AG04450 (cell line): ENCODE measurements at regions of chr1 and their contacts with region 1.

Region 1: DNA sequence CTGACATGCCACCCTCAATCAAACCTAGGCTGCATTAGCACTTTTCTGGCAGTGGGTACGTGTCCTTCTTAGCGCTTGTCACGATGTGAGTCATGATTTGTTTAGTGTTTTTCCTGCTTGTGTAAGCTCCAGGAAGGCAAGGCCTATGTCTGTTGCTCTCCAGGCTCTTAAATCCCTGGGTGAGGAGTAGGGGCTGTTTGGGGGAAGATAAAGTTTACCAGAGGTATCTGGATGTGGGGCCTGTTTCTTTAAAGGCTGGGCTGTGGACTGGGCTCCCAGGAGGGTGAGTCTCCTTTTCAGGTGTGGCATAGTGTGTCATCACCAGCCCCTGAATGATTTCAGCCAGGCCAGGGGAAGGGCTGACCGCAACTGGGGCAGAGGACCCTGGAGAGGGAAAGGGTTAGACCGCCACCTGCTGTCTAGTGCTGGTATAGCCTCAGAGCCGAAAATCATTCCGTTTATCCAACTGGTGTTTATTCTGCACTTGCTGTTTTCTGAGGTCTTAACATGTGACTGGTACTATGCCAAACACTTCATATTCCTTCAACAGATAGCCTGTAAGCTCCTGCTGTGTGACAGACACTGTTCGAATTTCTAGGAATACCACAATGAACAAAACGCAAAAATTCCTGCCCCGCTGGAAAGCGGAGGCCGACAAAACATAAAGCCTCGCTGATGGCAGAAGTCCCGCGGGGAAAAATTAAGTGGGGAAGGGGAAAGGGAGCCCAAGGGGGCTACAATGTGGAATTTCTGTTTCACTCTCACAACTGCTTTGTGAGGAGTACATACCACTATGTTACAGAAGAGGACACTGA is 9.7 kb downstream of the SERINC2 start:
- DNase-seq: peak; percentile 55
- H3K4me3 ChIP-seq: no peak overlapping the region
- H3K27ac ChIP-seq: peak overlapping the region; percentile 87
- H3K27me3 ChIP-seq: no peaks in the 10 kb centered on the region
- CTCF ChIP-seq: peak; percentile 99

Region 2: GRCh38 chr1:31354283-31354682 is 68.4 kb before region 1 on chr1:
- CTCF ChIA-PET with region 1: no interaction called
- POLR2A ChIA-PET with region 1: no interaction called
- DNase-seq: no peak
- H3K4me3 ChIP-seq: no peak overlapping the region
- H3K27ac ChIP-seq: no peak overlapping the region
- H3K27me3 ChIP-seq: no peaks in the 10 kb centered on the region
- CTCF ChIP-seq: no peak

Region 3: DNA sequence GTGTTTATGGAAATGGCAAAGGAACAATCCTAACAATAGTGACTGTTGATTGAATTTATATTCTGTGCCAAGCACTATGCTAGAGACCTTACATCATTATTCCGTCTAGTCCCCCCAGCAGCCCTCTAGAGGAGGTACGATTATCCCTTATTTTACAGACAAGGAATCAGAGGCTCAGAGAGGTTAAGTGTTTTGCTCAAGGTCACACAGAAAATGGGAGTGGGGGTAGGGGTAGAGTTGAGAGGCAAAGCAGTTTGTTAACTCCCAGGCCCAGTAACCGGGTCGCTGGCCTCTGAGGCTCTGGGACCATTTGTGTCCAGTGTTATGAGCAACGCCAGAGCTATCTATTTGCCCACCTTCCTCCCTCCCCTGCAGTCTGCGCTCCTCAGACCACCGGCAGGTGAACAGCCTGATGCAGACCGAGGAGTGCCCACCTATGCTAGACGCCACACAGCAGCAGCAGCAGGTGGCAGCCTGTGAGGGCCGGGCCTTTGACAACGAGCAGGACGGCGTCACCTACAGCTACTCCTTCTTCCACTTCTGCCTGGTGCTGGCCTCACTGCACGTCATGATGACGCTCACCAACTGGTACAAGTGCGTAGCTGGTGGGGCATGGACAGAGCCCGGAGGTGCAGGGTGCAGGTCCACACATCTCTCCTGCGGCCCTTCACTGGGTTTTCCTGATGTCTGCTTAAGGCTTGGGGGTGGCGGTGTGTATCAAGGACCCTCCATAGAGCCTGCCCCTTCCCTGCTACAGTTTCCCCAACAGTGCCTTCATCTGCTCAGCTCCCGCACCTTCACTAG is 10.1 kb after region 1 on chr1:
- CTCF ChIA-PET with region 1: interaction called, 21 read pairs
- POLR2A ChIA-PET with region 1: no interaction called
- DNase-seq: no peak
- H3K4me3 ChIP-seq: no peak overlapping the region
- H3K27ac ChIP-seq: no peak overlapping the region
- H3K27me3 ChIP-seq: peaks cover 3% of the 10 kb centered on the region
- CTCF ChIP-seq: no peak

Region 4: DNA sequence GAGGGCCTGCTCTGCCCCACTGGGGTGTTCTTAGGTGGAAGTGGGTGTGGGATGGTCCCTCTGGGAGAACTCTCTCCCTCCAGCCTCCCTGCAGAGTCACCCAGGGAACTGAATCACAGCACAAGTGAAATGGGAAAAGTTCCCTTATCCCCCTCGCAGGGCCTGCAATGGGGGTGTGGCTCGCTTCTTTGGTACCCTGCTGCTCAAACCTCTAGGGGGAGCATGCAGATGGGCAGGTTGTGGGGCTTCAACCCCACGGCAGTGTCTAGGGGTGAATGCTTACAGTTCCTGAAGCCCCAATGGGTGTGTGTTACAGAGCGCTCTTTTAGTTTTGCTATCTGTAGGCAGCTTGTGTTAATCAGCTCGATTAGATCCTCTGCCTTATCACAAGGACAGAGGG is 94.6 kb after region 1 on chr1:
- CTCF ChIA-PET with region 1: no interaction called
- POLR2A ChIA-PET with region 1: no interaction called
- DNase-seq: no peak
- H3K4me3 ChIP-seq: no peak overlapping the region
- H3K27ac ChIP-seq: no peak overlapping the region
- H3K27me3 ChIP-seq: peaks cover 22% of the 10 kb centered on the region
- CTCF ChIP-seq: no peak

Region 5: GRCh38 chr1:31531177-31531999 is 108.7 kb after region 1 on chr1:
- CTCF ChIA-PET with region 1: interaction called, 10 read pairs
- POLR2A ChIA-PET with region 1: no interaction called
- DNase-seq: peak; percentile 32
- H3K4me3 ChIP-seq: no peak overlapping the region
- H3K27ac ChIP-seq: no peak overlapping the region
- H3K27me3 ChIP-seq: peaks cover 6% of the 10 kb centered on the region
- CTCF ChIP-seq: no peak

Region 6: DNA sequence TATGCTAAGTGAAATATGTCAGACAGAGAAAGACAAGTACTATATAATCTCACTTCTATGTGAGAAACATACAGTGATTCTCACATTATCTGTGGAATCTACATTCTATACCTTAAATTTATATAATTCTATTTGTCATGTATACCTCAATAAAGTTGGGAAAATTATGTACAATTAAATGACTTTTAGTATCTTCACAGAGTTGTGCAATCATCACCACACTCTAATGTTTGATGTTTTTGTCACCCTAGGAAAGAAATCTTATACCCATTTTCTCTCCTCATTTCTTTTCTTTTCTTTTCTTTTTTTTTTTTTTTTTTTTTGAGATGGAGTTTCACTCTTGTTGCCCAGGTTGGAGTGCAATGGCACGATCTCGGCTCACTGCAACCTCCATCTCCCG is 116.6 kb after region 1 on chr1:
- CTCF ChIA-PET with region 1: interaction called, 10 read pairs
- POLR2A ChIA-PET with region 1: no interaction called
- DNase-seq: no peak
- H3K4me3 ChIP-seq: no peak overlapping the region
- H3K27ac ChIP-seq: no peak overlapping the region
- H3K27me3 ChIP-seq: peaks cover 34% of the 10 kb centered on the region
- CTCF ChIP-seq: no peak

Region 7: DNA sequence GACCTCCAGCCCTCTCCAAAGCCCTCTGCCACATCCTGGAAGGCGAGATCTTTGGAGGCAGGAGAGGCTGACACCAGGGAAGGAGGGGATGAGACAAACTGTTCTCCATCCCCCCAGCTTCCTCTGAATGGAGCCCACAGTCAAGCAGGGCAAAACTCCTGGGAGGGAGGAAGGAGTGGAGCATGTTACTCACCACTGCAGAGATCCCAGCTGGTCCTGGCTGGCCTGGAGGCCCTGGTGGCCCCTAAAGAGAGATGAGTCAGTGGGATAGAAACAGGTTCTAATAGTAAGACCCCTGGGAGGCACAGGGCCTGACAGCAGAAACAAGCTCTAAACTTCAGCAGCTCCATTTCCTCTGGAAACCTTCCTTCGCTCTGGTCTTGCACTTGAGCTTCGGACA is 236.0 kb after region 1 on chr1:
- CTCF ChIA-PET with region 1: no interaction called
- POLR2A ChIA-PET with region 1: no interaction called
- DNase-seq: no peak
- H3K4me3 ChIP-seq: no peak overlapping the region
- H3K27ac ChIP-seq: peak overlapping the region; percentile 21
- H3K27me3 ChIP-seq: no peaks in the 10 kb centered on the region
- CTCF ChIP-seq: no peak